ENCODE measurements at regions of chr3 and their contacts with region 1.

Region 1: DNA sequence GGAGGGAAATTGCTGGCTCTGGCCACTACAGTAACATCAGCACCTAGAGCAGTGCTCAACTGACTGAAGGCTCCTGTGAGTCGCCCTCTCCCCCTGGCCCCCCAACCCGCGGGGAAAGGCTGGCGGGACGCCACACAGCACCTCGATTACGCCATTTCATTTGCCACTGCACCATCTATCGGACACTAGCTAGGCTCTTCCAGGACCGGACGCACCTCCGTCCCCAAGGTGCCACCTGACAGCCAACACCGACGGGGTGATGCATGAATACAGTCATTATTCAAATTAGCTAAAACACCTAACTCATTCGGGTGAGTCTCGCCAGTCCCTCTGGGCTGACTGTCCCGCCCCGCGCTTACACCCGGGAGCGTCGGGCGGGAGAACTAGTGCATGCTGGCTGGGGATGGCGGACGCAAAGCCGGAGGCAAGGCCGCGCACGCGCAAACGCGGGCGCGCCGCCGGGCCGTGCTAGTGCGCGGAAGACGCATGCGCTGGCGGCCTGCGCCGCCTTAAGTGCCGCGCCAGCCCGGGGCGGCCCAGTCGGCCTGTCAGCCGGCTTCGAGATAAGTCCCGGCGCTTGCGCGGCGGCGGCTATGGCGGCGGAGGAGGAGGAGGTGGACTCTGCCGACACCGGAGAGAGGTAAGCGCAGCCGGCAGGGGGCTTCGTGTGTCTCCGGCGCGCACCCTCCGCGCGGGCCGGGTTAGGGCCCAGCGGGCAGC is at the start of gene ABHD5:
- DNase-seq: peak; percentile 98
- ATAC-seq: peak; percentile 78
- H3K4me3 ChIP-seq: peak within 1 kb of the TSS; percentile 86
- H3K27ac ChIP-seq: peak within 1 kb of the TSS; percentile 53
- H3K4me1 ChIP-seq: peaks cover 39% of the 10 kb centered on the region
- H3K27me3 ChIP-seq: no peaks in the 10 kb centered on the region
- CTCF ChIP-seq: peak; percentile 34; the same call in 1 of the 2 replicates
- total RNA-seq, gene ABHD5: 27.1 and 29.5 TPM in 2 replicates

Region 2: DNA sequence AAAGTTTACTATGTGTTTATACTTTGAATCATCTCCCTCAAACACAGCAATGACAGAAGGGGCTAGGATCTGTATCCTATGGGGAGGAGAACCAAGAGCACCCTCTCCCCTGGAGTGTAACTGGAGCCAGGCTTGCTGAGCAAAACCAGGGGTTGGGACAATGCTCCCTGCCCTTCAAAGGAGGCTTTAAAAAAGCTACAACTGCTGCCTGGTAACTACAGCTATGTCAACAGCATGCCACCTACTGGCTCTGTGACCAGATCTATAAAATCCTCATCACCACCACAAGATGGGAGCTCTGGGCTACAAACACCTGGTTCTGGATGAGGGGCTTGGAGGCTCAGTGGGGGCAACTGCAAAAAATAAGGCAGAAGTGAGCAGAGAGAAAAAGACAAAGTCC is 130.6 kb before region 1 on chr3:
- CTCF ChIA-PET with region 1: interaction called, 5 read pairs
- POLR2A ChIA-PET with region 1: no interaction called
- intact Hi-C with region 1: loop called (anchors 2 kb)
- DNase-seq: peak; percentile 52
- ATAC-seq: peak; percentile 98
- H3K4me3 ChIP-seq: no peak overlapping the region
- H3K27ac ChIP-seq: peak overlapping the region; percentile 34
- H3K4me1 ChIP-seq: peaks cover 15% of the 10 kb centered on the region
- H3K27me3 ChIP-seq: no peaks in the 10 kb centered on the region
- CTCF ChIP-seq: peak; percentile 51

Region 3: GRCh38 chr3:43632269-43632733 is 58.3 kb before region 1 on chr3:
- CTCF ChIA-PET with region 1: interaction called, 4 read pairs
- POLR2A ChIA-PET with region 1: interaction called, 12 read pairs
- intact Hi-C with region 1: loop called (anchors 2 kb)
- DNase-seq: peak; percentile 98
- ATAC-seq: peak; percentile 99
- H3K4me3 ChIP-seq: no peak overlapping the region
- H3K27ac ChIP-seq: peak overlapping the region; percentile 88
- H3K4me1 ChIP-seq: peaks cover 24% of the 10 kb centered on the region
- H3K27me3 ChIP-seq: no peaks in the 10 kb centered on the region
- CTCF ChIP-seq: no peak

Region 4: DNA sequence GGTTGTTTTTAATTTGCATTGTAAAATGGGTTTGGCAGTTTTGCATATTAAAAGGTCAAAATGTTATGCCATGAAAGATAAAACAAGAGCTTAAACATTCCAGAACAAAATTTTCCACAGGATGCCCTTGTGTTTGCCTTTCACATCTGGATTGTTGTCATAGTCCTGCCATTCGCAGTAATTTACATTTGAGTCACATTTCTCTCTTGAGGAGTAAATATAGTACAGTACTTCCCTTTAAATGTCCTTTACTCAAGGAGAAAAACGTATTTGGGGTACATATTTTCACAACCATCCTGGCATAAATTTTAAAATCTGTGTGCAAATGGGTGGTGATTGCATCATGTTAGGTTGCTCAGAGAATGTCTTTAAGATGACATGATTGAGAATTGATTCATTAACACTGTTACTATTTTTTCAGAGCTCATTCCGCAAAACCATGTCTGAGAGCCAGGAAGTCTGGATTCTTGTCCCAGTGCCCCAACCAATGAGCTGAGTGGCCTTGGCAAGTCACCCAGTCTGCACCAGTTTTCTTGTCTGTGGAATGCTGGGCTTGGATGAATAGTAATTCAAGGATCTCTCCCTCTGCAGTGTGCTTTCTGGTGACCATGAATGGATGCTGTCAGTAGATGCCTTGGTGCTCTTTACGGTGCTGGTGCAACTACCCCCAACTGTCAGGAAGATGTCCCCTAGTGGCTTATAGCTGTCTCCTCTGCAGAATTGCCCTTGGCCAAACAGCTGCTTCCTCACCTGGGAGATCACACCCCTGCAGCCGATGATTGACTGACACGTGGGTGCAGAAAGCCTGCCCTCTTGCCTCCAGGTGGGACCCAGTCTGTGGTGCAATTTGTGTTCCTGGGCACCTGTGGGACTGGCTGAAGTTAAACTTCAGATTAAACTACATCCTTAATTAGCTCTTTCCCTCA is 43.2 kb after region 1 on chr3:
- CTCF ChIA-PET with region 1: no interaction called
- POLR2A ChIA-PET with region 1: interaction called, 11 read pairs
- intact Hi-C with region 1: no loop called
- DNase-seq: no peak
- ATAC-seq: no peak
- H3K4me3 ChIP-seq: no peak overlapping the region
- H3K27ac ChIP-seq: no peak overlapping the region
- H3K4me1 ChIP-seq: peaks cover 14% of the 10 kb centered on the region
- H3K27me3 ChIP-seq: no peaks in the 10 kb centered on the region
- CTCF ChIP-seq: no peak

Region 5: DNA sequence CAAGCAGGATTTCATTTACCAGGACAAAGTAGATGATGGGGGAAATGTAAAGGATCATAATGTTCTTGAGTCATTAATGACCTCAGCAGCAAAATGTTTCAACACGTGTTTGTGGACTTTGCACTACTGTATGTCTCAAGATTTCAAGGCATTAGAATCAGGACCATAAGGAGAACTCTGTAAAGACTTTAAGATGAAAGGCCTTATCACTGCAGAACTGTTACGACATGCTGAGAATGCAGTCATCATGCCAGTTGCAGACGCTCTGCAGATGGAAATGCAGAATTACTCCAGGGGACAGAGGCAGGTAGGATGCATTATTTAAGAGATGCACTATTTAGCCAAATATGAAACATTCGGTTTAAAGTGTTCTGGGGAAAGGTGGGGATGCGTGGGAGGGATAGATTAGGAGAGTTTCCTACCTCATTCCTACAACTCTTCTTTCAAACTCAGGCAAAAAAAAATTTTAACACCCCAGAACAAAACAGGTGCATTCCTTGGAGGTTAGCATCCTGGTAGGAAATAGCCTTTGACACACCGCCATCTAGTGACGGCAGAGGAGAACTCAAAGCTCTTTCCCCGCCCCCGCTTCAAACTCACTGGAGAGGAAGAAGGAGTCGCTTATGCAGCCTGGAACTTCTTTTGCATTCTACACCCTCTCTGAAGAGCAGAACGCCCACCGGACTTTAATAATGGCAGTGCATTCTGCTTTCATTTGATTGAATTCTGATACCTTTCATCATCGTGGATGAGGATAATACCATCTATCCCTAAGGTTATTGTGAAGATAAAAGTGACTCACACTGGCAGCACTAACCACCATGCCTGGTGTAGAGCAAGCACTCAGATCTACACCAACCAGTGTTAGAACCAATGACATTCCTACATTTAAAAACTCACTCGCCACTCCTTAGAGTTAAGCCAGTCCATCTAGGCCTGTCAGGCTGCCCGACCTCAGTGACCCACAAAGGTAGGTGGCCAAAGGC is 508.0 kb after region 1 on chr3:
- CTCF ChIA-PET with region 1: no interaction called
- POLR2A ChIA-PET with region 1: no interaction called
- intact Hi-C with region 1: loop called (anchors 2 kb)
- DNase-seq: peak; percentile 91
- ATAC-seq: peak; percentile 94
- H3K4me3 ChIP-seq: no peak overlapping the region
- H3K27ac ChIP-seq: no peak overlapping the region
- H3K4me1 ChIP-seq: peaks cover 7% of the 10 kb centered on the region; the same call in 1 of the 2 replicates
- H3K27me3 ChIP-seq: no peaks in the 10 kb centered on the region
- CTCF ChIP-seq: peak; percentile 90

Measured in PC-3 (cell line).